ENCODE measurements at regions of chr15 and their contacts with region 1.

Region 1: DNA sequence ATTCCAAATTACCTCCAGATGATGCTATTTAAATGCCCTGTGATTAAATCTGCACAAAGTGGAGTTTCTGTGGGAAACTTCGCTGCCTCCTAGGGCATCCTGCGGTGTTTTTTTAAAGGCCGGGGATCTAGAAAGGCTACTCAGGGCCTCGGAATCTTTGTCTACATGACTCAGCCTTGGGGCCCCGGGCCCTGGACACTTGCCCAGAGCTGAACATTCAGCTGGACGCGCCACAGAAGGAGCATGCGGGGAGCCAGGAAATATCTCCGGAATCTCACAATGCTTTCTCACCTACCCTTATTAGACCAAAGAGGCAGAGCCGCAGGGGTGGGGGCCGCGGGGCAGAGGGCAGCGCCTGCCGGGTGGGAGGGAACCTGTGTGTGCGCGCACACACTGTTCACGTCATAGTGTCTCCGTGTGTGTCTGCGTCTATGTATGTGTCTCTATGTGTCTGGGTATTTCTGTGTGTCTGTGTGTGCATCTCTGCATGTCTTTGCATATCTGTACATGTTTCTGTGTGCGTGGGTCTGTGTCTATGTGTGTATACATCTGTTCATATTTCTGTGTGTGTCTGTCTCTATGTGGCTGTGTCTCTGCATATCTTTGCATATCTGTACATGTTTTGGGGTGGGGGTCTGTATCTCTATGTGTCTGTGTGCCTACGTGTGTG is 145.4 kb upstream of the TPM1 start:
- DNase-seq: peak; percentile 98
- H3K4me3 ChIP-seq: peak overlapping the region in 1 of 3 experiments; percentile 25
- H3K27ac ChIP-seq: peak overlapping the region; percentile 100
- H3K4me1 ChIP-seq: peaks cover 79% of the 10 kb centered on the region
- H3K27me3 ChIP-seq: no peaks in the 10 kb centered on the region
- CTCF ChIP-seq: no peak

Region 2: GRCh38 chr15:62782039-62782791 is 114.9 kb before region 1 on chr15:
- CTCF ChIA-PET with region 1: interaction called, 3 read pairs
- dilution Hi-C with region 1: no loop called
- in situ Hi-C with region 1: no loop called
- intact Hi-C with region 1: loop called (anchors 1 kb)
- DNase-seq: peak; percentile 64
- H3K4me3 ChIP-seq: no peak overlapping the region
- H3K27ac ChIP-seq: no peak overlapping the region
- H3K4me1 ChIP-seq: peaks cover 10% of the 10 kb centered on the region
- H3K27me3 ChIP-seq: no peaks in the 10 kb centered on the region
- CTCF ChIP-seq: peak; percentile 79 to 81

Region 3: DNA sequence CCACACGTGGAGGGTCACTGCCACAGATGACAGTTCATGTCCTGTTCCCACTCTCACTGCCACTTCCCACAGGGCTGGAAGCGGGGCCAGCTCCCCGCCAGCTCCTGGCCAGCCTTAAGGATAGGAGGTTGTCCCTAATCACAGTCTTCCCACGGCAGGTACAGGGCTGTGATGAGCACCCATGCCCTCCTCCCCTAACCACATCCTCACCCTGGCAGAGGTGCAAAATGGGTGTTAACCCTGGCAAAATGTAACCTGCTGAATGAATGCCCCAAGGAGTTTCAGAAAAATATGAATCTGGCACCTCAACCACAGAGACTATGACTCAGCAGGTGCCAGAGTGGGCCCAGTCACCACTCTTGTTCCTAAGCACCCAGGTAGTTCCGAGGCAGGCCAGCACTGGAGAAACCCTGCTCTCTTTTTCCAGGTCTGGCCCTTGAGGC is 39.7 kb before region 1 on chr15:
- CTCF ChIA-PET with region 1: no interaction called
- dilution Hi-C with region 1: no loop called
- in situ Hi-C with region 1: no loop called
- intact Hi-C with region 1: loop called (anchors 1 kb)
- DNase-seq: peak; percentile 99
- H3K4me3 ChIP-seq: no peak overlapping the region
- H3K27ac ChIP-seq: peak overlapping the region; percentile 86
- H3K4me1 ChIP-seq: peaks cover 41% of the 10 kb centered on the region
- H3K27me3 ChIP-seq: no peaks in the 10 kb centered on the region
- CTCF ChIP-seq: no peak

Region 4: DNA sequence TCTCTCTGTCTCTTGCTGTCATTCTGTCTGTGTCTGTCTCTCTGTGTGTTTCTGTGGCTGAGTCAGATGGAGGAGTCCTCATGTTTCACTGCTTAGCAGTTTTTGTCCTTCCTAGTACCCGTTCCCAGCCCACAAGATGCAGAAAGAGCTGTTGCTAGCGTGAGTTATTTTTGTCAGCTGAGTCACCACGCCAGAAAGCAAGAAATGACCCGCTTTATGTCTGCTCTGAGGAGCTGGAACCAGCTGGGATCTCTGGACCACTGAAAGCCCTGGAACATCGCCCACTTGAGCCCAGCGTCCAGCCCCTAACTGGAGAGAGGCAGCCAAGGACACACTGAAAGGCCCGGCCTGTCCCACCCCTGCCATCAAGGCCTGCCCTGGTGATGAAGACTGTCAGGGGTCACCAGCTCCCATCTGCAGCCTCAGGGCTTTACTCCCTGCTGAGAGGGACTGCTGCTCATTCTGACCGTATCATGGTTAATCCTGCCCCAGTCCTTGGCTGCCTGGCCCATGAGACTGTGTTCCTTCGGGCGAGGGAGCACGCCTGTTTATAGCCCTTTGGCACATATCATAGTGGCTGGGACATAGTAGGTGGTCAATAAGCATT is 43.7 kb after region 1 on chr15:
- CTCF ChIA-PET with region 1: no interaction called
- dilution Hi-C with region 1: no loop called
- in situ Hi-C with region 1: no loop called
- intact Hi-C with region 1: loop called (anchors 1 kb)
- DNase-seq: peak; percentile 95
- H3K4me3 ChIP-seq: no peak overlapping the region
- H3K27ac ChIP-seq: peak overlapping the region; percentile 48
- H3K4me1 ChIP-seq: peaks cover 21% of the 10 kb centered on the region
- H3K27me3 ChIP-seq: no peaks in the 10 kb centered on the region
- CTCF ChIP-seq: no peak

Region 5: GRCh38 chr15:63006032-63006878 is 109.1 kb after region 1 on chr15:
- CTCF ChIA-PET with region 1: no interaction called
- dilution Hi-C with region 1: no loop called
- in situ Hi-C with region 1: no loop called
- intact Hi-C with region 1: loop called (anchors 1 kb)
- DNase-seq: peak; percentile 31
- H3K4me3 ChIP-seq: no peak overlapping the region
- H3K27ac ChIP-seq: no peak overlapping the region
- H3K4me1 ChIP-seq: peaks cover 14% of the 10 kb centered on the region
- H3K27me3 ChIP-seq: no peaks in the 10 kb centered on the region
- CTCF ChIP-seq: no peak

Region 6: GRCh38 chr15:63191895-63192618 is 294.9 kb after region 1 on chr15:
- CTCF ChIA-PET with region 1: no interaction called
- dilution Hi-C with region 1: no loop called
- in situ Hi-C with region 1: no loop called
- intact Hi-C with region 1: no loop called
- DNase-seq: no peak
- H3K4me3 ChIP-seq: no peak overlapping the region
- H3K27ac ChIP-seq: no peak overlapping the region
- H3K4me1 ChIP-seq: peaks cover 30% of the 10 kb centered on the region
- H3K27me3 ChIP-seq: no peaks in the 10 kb centered on the region
- CTCF ChIP-seq: no peak

Measured in mammary epithelial cell (primary cell).